ENCODE measurements at regions of chr11 and their contacts with region 1.

Region 1: GRCh38 chr11:119481021-119481666 is 58.2 kb upstream of the THY1 start:
- DNase-seq: peak; percentile 78 to 92 (median 89)
- H3K4me3 ChIP-seq: no peak overlapping the region
- H3K27ac ChIP-seq: no peak overlapping the region
- H3K4me1 ChIP-seq: peaks cover 0 to 8% of the 10 kb centered on the region in 2 donors
- H3K27me3 ChIP-seq: no peaks in the 10 kb centered on the region
- CTCF ChIP-seq: peak; percentile 94 to 98 (median 98)
- POLR2A ChIP-seq: no peak

Region 2: DNA sequence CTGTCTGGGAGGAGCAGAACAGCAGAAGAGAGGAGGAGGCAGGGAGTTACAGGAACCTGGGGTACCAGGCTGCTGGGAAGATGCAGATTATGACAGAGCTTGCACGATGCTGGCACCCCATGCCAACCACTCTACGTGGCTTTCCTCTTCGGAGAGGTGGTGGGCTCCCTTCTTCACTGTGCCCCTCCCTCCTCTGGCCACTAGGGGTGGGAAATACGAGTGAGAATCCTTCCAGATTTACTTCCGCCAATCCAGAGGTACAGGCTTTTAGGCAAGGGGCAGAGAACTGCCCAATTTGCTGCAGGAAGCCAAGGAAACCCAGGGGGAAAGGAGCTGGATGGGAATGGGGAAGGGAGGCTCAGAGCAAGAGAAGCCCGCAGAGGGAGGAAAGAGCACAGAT is 436.4 kb before region 1 on chr11:
- intact Hi-C with region 1: no loop called
- DNase-seq: no peak
- H3K4me3 ChIP-seq: no peak overlapping the region
- H3K27ac ChIP-seq: no peak overlapping the region
- H3K4me1 ChIP-seq: no peaks in the 10 kb centered on the region
- H3K27me3 ChIP-seq: no peaks in the 10 kb centered on the region
- CTCF ChIP-seq: no peak
- POLR2A ChIP-seq: no peak

Region 3: DNA sequence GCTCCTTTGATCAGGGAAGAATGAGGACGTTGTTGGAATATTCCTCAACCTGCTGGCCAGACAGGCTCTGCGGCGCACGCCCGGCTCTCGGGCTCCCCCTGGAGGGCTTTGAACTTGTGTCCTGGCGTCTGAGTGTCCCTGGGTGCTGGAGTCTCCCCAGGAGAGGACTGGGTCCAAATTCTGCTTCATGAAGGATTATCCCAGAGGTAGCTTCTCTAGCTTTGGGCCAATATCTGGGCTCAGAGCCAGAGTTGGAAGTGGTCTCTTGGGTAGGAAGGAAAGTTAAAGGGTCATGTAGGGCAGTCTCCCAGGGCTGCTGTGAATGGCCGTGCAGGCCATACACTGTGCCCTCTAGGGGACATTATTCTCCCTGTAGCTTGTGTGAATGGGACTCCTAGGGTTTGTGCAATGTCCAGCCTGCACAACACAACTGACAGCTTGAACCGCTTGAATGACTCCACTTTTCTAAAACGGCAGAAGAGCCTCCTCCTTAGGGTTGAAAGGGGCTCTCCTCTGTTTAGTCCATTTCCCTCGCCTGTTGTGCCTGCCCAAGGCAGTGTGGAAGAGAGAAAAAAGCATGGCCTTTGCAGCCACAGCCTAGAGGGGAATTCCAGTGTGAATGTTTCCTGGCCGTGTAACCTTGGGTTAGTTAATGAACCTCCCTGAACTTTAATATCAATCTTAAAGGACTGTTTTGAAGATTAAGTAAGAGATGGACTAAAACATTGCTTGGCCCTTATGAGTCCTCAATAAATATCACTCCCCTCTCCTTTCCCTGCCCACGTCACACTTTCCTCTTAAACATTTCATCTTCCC is 53.0 kb after region 1 on chr11:
- intact Hi-C with region 1: loop called (anchors 2 kb)
- DNase-seq: peak; percentile 82 to 93 (median 90)
- H3K4me3 ChIP-seq: no peak overlapping the region
- H3K27ac ChIP-seq: no peak overlapping the region
- H3K4me1 ChIP-seq: no peaks in the 10 kb centered on the region
- H3K27me3 ChIP-seq: no peaks in the 10 kb centered on the region
- CTCF ChIP-seq: peak; percentile 85 to 96 (median 91)
- POLR2A ChIP-seq: no peak

Region 4: DNA sequence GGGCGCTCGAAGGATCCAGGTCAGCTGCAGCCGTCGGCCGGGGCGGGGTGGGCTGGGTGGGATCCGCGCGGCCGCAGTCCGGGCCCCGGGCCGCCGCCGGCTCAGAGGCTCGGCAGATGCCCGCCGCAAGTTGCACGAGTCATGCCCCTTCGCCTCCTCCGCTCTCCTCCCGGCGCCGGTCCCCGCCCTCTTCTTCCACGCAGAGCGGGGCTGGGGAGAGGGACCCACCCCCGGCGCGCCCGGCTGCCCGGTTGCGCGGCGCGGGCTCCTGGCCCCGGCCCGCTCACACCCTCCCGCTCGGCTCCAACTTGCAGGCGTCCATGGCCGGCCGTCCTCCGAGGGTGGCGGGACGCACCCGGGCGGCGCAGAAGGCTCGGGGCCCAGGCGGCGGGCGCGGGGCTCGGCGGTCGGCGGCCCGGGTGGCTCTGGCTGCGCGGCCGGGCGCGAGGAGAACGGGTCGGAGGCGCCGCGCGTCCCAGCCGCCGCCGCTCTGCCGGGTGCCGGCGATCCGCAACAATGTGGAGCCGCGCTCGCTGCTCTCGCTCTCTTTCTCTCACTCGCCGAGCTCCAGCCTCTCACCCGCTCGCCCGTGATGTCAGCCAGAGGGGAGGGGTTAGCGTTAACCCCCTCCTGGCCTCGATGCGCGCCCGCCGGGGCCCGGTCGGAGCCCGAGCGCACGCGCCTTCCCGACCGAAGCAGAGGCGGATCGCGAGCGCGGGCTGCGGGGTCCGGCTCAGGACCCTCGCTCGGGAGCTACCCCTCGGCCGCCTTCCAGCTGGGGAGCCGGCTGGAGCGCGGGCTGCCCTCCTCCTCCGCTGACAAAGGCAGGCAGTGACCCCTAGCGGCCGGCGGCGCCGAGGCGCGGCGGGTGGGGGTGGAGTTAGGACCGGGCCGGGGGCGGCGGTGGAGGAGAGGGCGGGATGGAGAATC is 247.8 kb after region 1 on chr11 and contains the start of gene NECTIN1:
- intact Hi-C with region 1: loop called in 1 of 2 experiments (anchors 10 kb)
- DNase-seq: peak; percentile 84 to 91 (median 88)
- H3K4me3 ChIP-seq: peak within 1 kb of the TSS in 3 of 4 donors; percentile 18 to 85 (median 62)
- H3K27ac ChIP-seq: peak within 1 kb of the TSS in 4 of 5 donors; percentile 54 to 98 (median 76)
- H3K4me1 ChIP-seq: peaks cover 16 to 24% of the 10 kb centered on the region in 2 donors
- H3K27me3 ChIP-seq: no peaks in the 10 kb centered on the region
- CTCF ChIP-seq: peak; percentile 69 to 97 (median 85)
- POLR2A ChIP-seq: peak; percentile 75 to 93
- total RNA-seq, gene NECTIN1: 1.6 to 19.6 (median 5.3) TPM

Region 5: GRCh38 chr11:120102050-120102863 is 621.1 kb after region 1 on chr11:
- intact Hi-C with region 1: loop called in 1 of 2 experiments (anchors 5 kb)
- DNase-seq: no peak
- H3K4me3 ChIP-seq: no peak overlapping the region
- H3K27ac ChIP-seq: no peak overlapping the region
- H3K4me1 ChIP-seq: no peaks in the 10 kb centered on the region
- H3K27me3 ChIP-seq: no peaks in the 10 kb centered on the region
- CTCF ChIP-seq: no peak
- POLR2A ChIP-seq: no peak

Region 6: GRCh38 chr11:120108154-120108865 is 627.2 kb after region 1 on chr11:
- intact Hi-C with region 1: loop called (anchors 5 to 10 kb)
- DNase-seq: peak; percentile 46 to 85 (median 77)
- H3K4me3 ChIP-seq: no peak overlapping the region
- H3K27ac ChIP-seq: no peak overlapping the region
- H3K4me1 ChIP-seq: no peaks in the 10 kb centered on the region
- H3K27me3 ChIP-seq: peaks cover 7% of the 10 kb centered on the region
- CTCF ChIP-seq: peak; percentile 96 to 99 (median 98)
- POLR2A ChIP-seq: no peak

Measured in adrenal gland (tissue), 19 donors.